ENCODE measurements at regions of chr21 and their contacts with region 1.

Region 1: DNA sequence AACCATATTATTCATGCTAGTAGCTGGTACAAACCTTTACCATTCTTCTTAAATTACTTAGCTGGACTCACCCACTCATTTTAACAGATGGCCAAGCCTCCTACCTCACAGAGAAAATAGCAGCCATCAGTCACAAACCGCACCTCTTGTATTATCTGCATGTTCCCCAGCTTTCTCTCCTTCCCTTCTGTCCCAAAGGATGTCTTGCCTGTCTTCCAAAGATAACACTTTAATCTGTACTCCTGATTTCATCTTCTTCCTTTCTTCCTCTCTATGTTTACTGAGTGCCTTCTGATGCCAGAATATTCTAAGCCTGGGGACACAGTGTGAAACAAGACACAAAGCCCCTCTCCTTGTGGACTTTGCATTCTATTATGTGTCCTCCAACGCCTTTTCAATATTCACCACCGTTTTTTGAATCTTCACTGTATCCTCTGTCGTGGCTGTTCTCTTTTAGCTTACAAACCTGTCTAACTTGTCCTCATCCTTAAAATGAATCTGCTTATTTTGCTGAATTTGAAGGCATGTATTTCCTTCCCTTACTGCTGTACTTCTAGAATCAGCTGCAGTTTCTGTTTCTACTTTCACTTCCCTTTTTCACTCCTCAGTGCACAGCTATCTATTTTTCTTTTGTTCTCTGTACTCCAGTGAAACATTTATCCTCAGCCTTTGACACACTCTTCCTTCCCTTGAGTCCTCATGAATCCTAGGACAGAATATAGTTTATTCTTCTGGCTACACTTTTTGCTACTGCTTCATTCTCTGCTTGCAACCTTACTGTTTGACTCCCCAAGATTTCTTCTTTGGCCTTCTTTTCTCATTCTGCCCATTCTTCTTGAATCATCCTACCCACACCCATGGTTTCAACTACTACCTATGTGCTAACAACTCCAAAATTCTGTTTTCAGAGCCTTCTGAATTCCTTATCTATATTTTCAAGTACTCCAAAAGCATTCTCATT is 216.9 kb upstream of the SAMSN1 start:
- DNase-seq: peak; percentile 83
- ATAC-seq: peak; percentile 93
- H3K4me3 ChIP-seq: peak overlapping the region; percentile 24 to 72 (median 48)
- H3K4me3 Mint-ChIP-seq: no peak overlapping the region
- H3K27ac ChIP-seq: peak overlapping the region; percentile 69 to 87
- H3K27ac Mint-ChIP-seq: no peak overlapping the region
- H3K4me1 ChIP-seq: peaks cover 27 to 36% of the 10 kb centered on the region in 2 donors
- H3K4me1 Mint-ChIP-seq: peaks cover 36% of the 10 kb centered on the region
- H3K27me3 ChIP-seq: no peaks in the 10 kb centered on the region
- H3K27me3 Mint-ChIP-seq: no peaks in the 10 kb centered on the region
- CTCF ChIP-seq: no peak

Region 2: GRCh38 chr21:14382835-14383594 is 380.0 kb before region 1 on chr21 and contains the start of gene HSPA13:
- CTCF ChIA-PET with region 1: interaction called, 3 read pairs
- POLR2A ChIA-PET with region 1: no interaction called
- intact Hi-C with region 1: loop called (anchors 1 kb)
- DNase-seq: peak; percentile 100
- ATAC-seq: peak; percentile 93
- H3K4me3 ChIP-seq: peak within 1 kb of the TSS; percentile 85 to 95 (median 88)
- H3K4me3 Mint-ChIP-seq: peak within 1 kb of the TSS; percentile 100
- H3K27ac ChIP-seq: peak within 1 kb of the TSS; percentile 91 to 96
- H3K27ac Mint-ChIP-seq: peak within 1 kb of the TSS; percentile 98
- H3K4me1 ChIP-seq: peaks cover 10 to 11% of the 10 kb centered on the region in 2 donors
- H3K4me1 Mint-ChIP-seq: peaks cover 37% of the 10 kb centered on the region
- H3K27me3 ChIP-seq: no peaks in the 10 kb centered on the region
- H3K27me3 Mint-ChIP-seq: no peaks in the 10 kb centered on the region
- CTCF ChIP-seq: no peak
- total RNA-seq, gene HSPA13: 19.1 and 19.3 TPM in 2 replicates

Region 3: GRCh38 chr21:14545906-14546480 is 217.0 kb before region 1 on chr21 and contains the start of gene SAMSN1:
- CTCF ChIA-PET with region 1: no interaction called
- POLR2A ChIA-PET with region 1: no interaction called
- intact Hi-C with region 1: loop called (anchors 5 kb)
- DNase-seq: peak; percentile 78
- ATAC-seq: peak; percentile 94
- H3K4me3 ChIP-seq: peak within 1 kb of the TSS; percentile 35 to 91 (median 57)
- H3K4me3 Mint-ChIP-seq: peak within 1 kb of the TSS; percentile 96
- H3K27ac ChIP-seq: peak within 1 kb of the TSS; percentile 37 to 59
- H3K27ac Mint-ChIP-seq: peak within 1 kb of the TSS; percentile 94
- H3K4me1 ChIP-seq: peaks cover 27 to 29% of the 10 kb centered on the region in 2 donors
- H3K4me1 Mint-ChIP-seq: peaks cover 45% of the 10 kb centered on the region
- H3K27me3 ChIP-seq: no peaks in the 10 kb centered on the region
- H3K27me3 Mint-ChIP-seq: no peaks in the 10 kb centered on the region
- CTCF ChIP-seq: no peak
- total RNA-seq, gene SAMSN1: 53.1 and 57.6 TPM in 2 replicates

Region 4: DNA sequence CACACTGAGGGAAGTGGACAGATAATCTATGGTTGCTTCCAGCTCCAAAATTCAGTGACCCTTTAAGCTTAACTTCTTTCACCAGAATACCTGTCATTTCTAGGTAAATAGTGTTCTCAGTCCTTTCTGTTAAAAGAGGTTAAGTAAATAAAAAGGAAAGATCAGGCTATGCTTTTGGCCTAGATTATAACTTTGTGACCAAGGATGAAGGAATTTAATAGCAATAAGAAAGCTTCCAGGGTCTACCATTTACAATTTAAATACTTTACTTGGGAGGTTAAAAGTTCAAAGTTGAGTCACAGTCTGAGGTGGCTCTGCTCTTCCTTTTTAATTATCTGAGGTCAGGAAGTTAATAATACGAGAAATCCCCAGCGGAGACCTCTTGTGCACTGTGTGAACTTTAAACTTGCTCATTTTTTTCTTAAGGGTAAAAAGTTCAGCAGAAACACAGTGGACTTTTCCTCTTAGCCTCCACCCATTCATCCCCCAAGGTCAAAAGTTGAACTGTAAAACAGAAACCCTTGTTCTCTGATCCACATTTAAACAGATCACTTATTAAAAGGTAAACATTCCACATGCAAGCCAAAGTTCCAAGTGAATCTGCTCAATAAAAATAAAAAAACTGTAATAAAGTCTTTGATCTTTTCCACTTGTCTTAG is 114.7 kb after region 1 on chr21:
- CTCF ChIA-PET with region 1: no interaction called
- POLR2A ChIA-PET with region 1: no interaction called
- intact Hi-C with region 1: loop called (anchors 10 kb)
- DNase-seq: no peak
- ATAC-seq: peak; percentile 68
- H3K4me3 ChIP-seq: no peak overlapping the region
- H3K4me3 Mint-ChIP-seq: peak overlapping the region; percentile 12
- H3K27ac ChIP-seq: no peak overlapping the region
- H3K27ac Mint-ChIP-seq: no peak overlapping the region
- H3K4me1 ChIP-seq: peaks cover 48 to 57% of the 10 kb centered on the region in 2 donors
- H3K4me1 Mint-ChIP-seq: peaks cover 74% of the 10 kb centered on the region
- H3K27me3 ChIP-seq: no peaks in the 10 kb centered on the region
- H3K27me3 Mint-ChIP-seq: no peaks in the 10 kb centered on the region
- CTCF ChIP-seq: no peak

Region 5: DNA sequence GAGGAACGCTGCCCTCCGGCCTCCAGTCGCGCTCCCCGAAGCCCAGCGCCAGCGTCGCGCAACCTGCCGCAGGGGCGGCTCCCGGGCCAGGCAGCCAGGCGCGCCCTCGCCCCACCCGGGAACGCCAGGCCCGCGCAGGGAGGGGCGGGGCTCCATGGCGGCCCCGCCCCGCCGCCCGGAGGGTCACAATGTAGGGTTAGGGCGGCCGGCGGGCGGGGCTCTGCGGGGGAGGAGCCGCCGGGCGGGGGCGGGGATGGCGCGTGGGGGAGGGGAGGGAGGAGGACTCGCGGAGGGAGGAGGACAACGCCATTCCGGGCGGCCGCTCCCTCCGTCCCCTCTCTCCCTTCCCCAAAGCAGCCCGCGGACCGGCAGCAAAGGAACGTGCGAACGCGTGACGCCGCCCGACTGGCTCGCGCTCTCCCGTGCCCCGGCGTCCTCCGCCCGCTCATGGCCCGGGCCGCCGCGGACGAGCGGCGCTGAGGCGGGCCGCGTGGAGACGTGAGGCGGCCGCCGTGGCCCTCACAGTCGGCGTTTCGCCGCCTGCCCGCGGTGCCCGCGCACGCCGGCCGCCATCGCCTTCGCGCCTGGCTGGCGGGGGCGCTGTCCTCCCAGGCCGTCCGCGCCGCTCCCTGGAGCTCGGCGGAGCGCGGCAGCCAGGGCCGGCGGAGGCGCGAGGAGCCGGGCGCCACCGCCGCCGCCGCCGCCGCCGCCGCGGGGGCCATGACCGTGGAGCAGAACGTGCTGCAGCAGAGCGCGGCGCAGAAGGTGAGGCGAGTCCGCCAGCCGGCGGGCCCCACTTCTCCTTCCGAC is 966.9 kb after region 1 on chr21 and contains the start of gene USP25:
- CTCF ChIA-PET with region 1: no interaction called
- POLR2A ChIA-PET with region 1: no interaction called
- intact Hi-C with region 1: loop called (anchors 5 kb)
- DNase-seq: peak; percentile 92
- ATAC-seq: peak; percentile 87
- H3K4me3 ChIP-seq: peak within 1 kb of the TSS; percentile 56 to 96 (median 73)
- H3K4me3 Mint-ChIP-seq: peak within 1 kb of the TSS; percentile 95
- H3K27ac ChIP-seq: peak within 1 kb of the TSS; percentile 53 to 82
- H3K27ac Mint-ChIP-seq: peak within 1 kb of the TSS; percentile 93
- H3K4me1 ChIP-seq: peaks cover 18 to 31% of the 10 kb centered on the region in 2 donors
- H3K4me1 Mint-ChIP-seq: peaks cover 36% of the 10 kb centered on the region
- H3K27me3 ChIP-seq: no peaks in the 10 kb centered on the region
- H3K27me3 Mint-ChIP-seq: peaks cover 6% of the 10 kb centered on the region
- CTCF ChIP-seq: no peak
- total RNA-seq, gene USP25: 53.2 and 55.5 TPM in 2 replicates

Measured in B cell (primary cell).